ENCODE measurements at regions of chr14 and their contacts with region 1.

Region 1: GRCh38 chr14:64625475-64626269 is 75.9 kb downstream of the PPP1R36 start:
- H3K4me3 ChIP-seq: no peak overlapping the region
- H3K27ac ChIP-seq: no peak overlapping the region
- H3K4me1 ChIP-seq: no peaks in the 10 kb centered on the region
- CTCF ChIP-seq: no peak

Region 2: DNA sequence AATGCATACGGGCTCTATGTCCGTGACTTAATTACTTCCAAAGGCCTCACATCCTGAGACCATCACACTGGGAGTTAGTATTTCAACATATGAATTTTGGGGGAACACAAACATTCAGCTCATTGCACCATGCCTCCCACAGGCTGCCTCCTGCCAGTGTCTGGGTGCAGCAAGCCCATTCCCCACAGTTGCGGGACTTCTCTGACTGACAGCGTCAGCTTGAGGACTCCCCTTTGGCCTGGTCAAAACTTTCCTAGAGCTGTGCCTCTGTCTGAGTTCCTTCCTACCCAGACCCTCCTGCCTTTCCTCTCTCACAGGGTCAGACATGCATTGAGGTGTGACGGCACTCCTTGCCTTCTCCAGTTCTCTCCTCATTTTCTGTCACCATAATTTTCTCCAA is 48.5 kb before region 1 on chr14:
- CTCF ChIA-PET with region 1: no interaction called
- POLR2A ChIA-PET with region 1: no interaction called
- H3K4me3 ChIP-seq: no peak overlapping the region
- H3K27ac ChIP-seq: no peak overlapping the region
- H3K4me1 ChIP-seq: no peaks in the 10 kb centered on the region
- CTCF ChIP-seq: no peak

Region 3: DNA sequence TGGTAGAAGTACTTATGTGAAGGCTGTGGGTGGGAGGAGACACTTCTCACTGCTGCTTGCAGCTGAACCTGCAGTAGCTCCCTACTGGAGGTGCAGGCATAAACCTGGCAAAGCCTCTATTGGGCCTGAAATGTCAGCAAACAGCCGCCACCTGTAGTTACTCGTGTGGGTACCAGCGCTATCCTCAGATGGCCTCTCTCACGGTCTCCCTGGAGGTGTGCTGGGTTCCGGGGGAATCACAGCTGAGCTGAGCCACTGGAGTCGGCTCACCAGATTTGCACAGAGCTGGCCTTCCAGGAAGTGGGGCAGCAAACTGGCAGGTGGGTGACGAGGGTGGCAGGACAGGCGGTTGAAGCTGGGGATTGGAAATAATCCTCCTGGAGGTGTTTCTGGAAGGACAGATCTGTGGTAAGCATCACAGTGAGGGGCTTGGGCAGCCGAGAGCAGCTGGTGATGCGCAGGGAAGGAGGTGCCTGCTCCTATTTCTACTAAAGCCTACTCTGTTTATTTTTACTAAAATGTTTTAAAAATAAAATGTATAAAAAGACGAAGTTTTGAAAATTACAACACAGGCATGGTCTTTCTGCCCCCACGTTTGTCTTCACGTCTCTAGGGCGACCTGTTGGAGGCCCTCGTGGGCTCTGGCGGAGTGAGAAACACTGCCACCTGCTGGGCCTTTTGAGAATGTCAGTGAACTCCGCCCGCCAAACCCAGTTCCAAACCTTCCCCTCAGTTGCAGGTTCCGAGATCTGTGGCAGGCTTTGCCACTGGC is 10.7 kb after region 1 on chr14:
- CTCF ChIA-PET with region 1: interaction called, 14 read pairs
- POLR2A ChIA-PET with region 1: no interaction called
- H3K4me3 ChIP-seq: no peak overlapping the region
- H3K27ac ChIP-seq: no peak overlapping the region
- H3K4me1 ChIP-seq: no peaks in the 10 kb centered on the region
- CTCF ChIP-seq: peak; percentile 57

Measured in HEK293 (cell line).